Mammary epithelial cell (primary cell): ENCODE measurements at regions of chr16 and their contacts with region 1.

Region 1: GRCh38 chr16:58025351-58026138 is at the start of gene MMP15:
- DNase-seq: peak; percentile 76
- H3K4me3 ChIP-seq: peak within 1 kb of the TSS; percentile 45 to 65 (median 60)
- H3K27ac ChIP-seq: no peak within 1 kb of the TSS
- H3K4me1 ChIP-seq: peaks cover 44% of the 10 kb centered on the region
- H3K27me3 ChIP-seq: no peaks in the 10 kb centered on the region
- CTCF ChIP-seq: no peak
- total RNA-seq, gene MMP15: 7.4 to 17.3 TPM

Region 2: DNA sequence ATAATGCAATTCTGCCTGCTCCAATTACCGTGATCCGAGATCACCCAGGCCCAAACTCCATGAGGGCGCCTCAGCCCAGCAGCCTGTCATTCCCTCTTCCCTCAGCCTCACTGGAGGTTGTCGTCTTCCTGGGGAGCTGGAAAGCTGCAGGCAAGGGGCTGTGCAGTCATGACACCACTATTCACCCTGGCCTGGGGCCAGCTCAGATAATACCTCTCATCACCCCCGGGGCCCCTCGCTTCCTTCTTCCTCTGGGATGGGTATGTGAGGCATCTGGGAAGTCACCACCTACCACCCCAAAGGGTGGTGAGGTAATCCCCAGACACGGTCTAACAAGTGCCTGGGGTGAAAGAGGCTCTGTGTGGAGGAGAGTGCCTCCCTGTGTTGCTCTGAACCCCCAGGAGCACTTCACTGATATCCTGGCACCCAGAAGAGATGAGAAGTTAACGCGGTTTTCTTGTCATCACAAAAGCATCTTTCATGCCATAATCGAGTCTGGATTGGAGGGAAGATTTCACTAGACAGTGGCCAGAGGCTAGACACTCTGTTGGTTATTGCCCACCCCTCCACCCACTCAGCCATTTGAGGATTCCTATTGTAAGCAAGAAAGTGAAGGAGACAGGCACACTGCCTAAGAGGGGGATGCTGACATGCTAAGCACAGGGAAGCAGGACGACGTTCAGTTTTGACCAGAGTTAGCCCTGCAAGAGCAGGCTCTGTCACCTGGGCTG is 85.2 kb after region 1 on chr16:
- CTCF ChIA-PET with region 1: no interaction called
- dilution Hi-C with region 1: no loop called
- in situ Hi-C with region 1: loop called in 1 of 2 experiments (anchors 10 kb)
- intact Hi-C with region 1: no loop called
- DNase-seq: peak; percentile 47
- H3K4me3 ChIP-seq: no peak overlapping the region
- H3K27ac ChIP-seq: no peak overlapping the region
- H3K4me1 ChIP-seq: peaks cover 11% of the 10 kb centered on the region
- H3K27me3 ChIP-seq: no peaks in the 10 kb centered on the region
- CTCF ChIP-seq: peak in 1 of 2 donors; percentile 10

Region 3: GRCh38 chr16:58129097-58129936 is 103.8 kb after region 1 on chr16 and contains the start of gene CFAP20:
- CTCF ChIA-PET with region 1: no interaction called
- dilution Hi-C with region 1: no loop called
- in situ Hi-C with region 1: loop called in 1 of 2 experiments (anchors 10 kb)
- intact Hi-C with region 1: loop called (anchors 1 kb)
- DNase-seq: peak; percentile 100
- H3K4me3 ChIP-seq: peak within 1 kb of the TSS; percentile 76 to 98 (median 78)
- H3K27ac ChIP-seq: peak within 1 kb of the TSS; percentile 78
- H3K4me1 ChIP-seq: peaks cover 26% of the 10 kb centered on the region
- H3K27me3 ChIP-seq: no peaks in the 10 kb centered on the region
- CTCF ChIP-seq: no peak
- total RNA-seq, gene CFAP20: 40.7 to 43.6 TPM

Region 4: GRCh38 chr16:58152246-58152868 is 126.8 kb after region 1 on chr16:
- CTCF ChIA-PET with region 1: no interaction called
- dilution Hi-C with region 1: no loop called
- in situ Hi-C with region 1: no loop called
- intact Hi-C with region 1: loop called (anchors 10 kb)
- DNase-seq: no peak
- H3K4me3 ChIP-seq: no peak overlapping the region
- H3K27ac ChIP-seq: no peak overlapping the region
- H3K4me1 ChIP-seq: no peaks in the 10 kb centered on the region
- H3K27me3 ChIP-seq: no peaks in the 10 kb centered on the region
- CTCF ChIP-seq: no peak

Region 5: GRCh38 chr16:58198022-58198683 is 172.6 kb after region 1 on chr16 and contains the start of gene CSNK2A2:
- CTCF ChIA-PET with region 1: no interaction called
- dilution Hi-C with region 1: no loop called
- in situ Hi-C with region 1: no loop called
- intact Hi-C with region 1: loop called (anchors 2 kb)
- DNase-seq: peak; percentile 59
- H3K4me3 ChIP-seq: peak within 1 kb of the TSS; percentile 74 to 88 (median 82)
- H3K27ac ChIP-seq: no peak within 1 kb of the TSS
- H3K4me1 ChIP-seq: peaks cover 16% of the 10 kb centered on the region
- H3K27me3 ChIP-seq: no peaks in the 10 kb centered on the region
- CTCF ChIP-seq: peak; percentile 31 to 50
- total RNA-seq, gene CSNK2A2: 29.3 to 79.7 TPM

Region 6: DNA sequence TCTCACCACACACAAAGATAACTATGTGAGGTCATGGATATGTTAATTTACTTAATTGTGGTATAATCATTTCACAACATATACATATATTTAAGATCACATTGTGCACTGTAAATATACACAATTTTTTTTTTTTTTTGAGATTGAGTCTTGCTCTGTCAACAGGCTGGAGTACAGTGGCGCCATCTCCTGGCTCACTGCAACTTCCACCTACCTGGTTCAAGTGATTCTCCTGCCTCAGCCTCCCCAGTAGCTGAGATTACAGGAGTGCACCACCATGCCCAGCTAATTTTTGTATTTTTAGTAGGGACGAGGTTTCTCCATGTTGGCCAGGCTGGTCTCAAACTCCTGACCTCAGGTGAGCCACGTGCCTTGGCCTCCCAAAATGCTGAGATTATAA is 280.8 kb after region 1 on chr16:
- CTCF ChIA-PET with region 1: no interaction called
- dilution Hi-C with region 1: no loop called
- in situ Hi-C with region 1: loop called in 1 of 2 experiments (anchors 25 kb)
- intact Hi-C with region 1: loop called (anchors 1 kb)
- DNase-seq: peak; percentile 21
- H3K4me3 ChIP-seq: no peak overlapping the region
- H3K27ac ChIP-seq: no peak overlapping the region
- H3K4me1 ChIP-seq: no peaks in the 10 kb centered on the region
- H3K27me3 ChIP-seq: no peaks in the 10 kb centered on the region
- CTCF ChIP-seq: peak; percentile 46 to 69

Region 7: GRCh38 chr16:58661199-58661830 is 635.8 kb after region 1 on chr16:
- CTCF ChIA-PET with region 1: no interaction called
- dilution Hi-C with region 1: no loop called
- in situ Hi-C with region 1: no loop called
- intact Hi-C with region 1: loop called (anchors 10 kb)
- DNase-seq: peak; percentile 81
- H3K4me3 ChIP-seq: no peak overlapping the region
- H3K27ac ChIP-seq: no peak overlapping the region
- H3K4me1 ChIP-seq: no peaks in the 10 kb centered on the region
- H3K27me3 ChIP-seq: no peaks in the 10 kb centered on the region
- CTCF ChIP-seq: peak; percentile 70 to 76